ENCODE measurements at regions of chr13 and their contacts with region 1.

Region 1: DNA sequence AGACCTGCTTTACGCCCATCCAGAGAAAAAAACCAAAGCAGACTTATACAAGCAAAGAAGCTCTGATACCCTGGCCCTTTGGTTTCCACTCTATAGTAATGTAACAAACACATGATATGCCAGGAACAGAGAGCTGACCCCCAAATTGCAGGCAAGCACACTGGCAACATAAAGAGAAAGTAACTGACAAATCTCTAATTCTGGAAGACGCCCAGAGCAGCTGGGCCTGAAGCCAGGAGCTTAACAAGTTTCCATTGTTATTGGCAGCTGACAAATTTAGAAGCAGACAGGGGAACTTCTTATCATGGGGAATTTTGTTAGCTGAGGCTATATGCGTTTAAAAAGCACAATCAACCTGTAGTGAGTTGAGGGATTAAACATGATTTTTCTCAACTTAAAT is 158.0 kb downstream of the DLEU7 start:
- DNase-seq: peak; percentile 84 to 89 (median 87)
- ATAC-seq: peak; percentile 78 to 90 (median 82)
- H3K4me3 ChIP-seq: peak overlapping the region in 1 of 12 donors; percentile 9
- H3K27ac ChIP-seq: peak overlapping the region; percentile 28 to 91 (median 78)
- H3K4me1 ChIP-seq: peaks cover 5 to 47% (median 34%) of the 10 kb centered on the region in 12 donors
- H3K27me3 ChIP-seq: no peaks in the 10 kb centered on the region
- CTCF ChIP-seq: no peak
- POLR2A ChIP-seq: no peak

Region 2: GRCh38 chr13:50589139-50589538 is 96.4 kb before region 1 on chr13:
- intact Hi-C with region 1: loop called in 4 of 10 experiments (anchors 10 kb)
- DNase-seq: peak in 1 of 5 donors; percentile 35
- ATAC-seq: peak in 3 of 4 donors; percentile 29 to 60 (median 40)
- H3K4me3 ChIP-seq: no peak overlapping the region
- H3K27ac ChIP-seq: peak overlapping the region in 1 of 12 donors; percentile 26
- H3K4me1 ChIP-seq: peaks cover 0 to 36% (median 11%) of the 10 kb centered on the region in 12 donors
- H3K27me3 ChIP-seq: no peaks in the 10 kb centered on the region
- CTCF ChIP-seq: no peak
- POLR2A ChIP-seq: no peak

Region 3: GRCh38 chr13:50594276-50595051 is 91.0 kb before region 1 on chr13:
- intact Hi-C with region 1: loop called in 7 of 10 experiments (anchors 5 to 10 kb)
- DNase-seq: no peak
- ATAC-seq: no peak
- H3K4me3 ChIP-seq: peak overlapping the region in 1 of 12 donors; percentile 7
- H3K27ac ChIP-seq: peak overlapping the region in 6 of 12 donors; percentile 10 to 63 (median 28)
- H3K4me1 ChIP-seq: peaks cover 0 to 58% (median 29%) of the 10 kb centered on the region in 12 donors
- H3K27me3 ChIP-seq: no peaks in the 10 kb centered on the region
- CTCF ChIP-seq: no peak
- POLR2A ChIP-seq: no peak

Measured in heart left ventricle (tissue), 16 donors.